Panc1 (cell line): ENCODE measurements at regions of chr5 and their contacts with region 1.

Region 1: DNA sequence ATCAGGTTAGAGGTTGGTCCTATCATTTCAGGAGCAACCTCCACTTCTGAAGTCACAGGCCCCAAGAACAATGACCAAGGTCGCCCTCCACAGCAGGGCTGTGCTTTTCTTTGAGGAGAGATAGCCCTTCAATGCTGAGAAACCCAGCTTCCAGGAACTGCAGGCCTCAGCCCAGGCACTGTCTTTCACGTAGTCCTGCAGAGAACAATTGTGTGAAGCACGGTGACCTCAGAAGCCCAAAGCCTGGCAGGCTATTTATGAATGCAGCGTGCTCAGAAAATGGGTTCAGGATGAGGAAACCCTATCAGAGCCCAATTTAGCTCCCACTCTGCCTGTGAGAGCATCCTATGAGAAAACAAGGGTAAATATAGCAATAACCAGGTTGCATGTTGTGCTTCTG is 388.3 kb downstream of the PLK2 start:
- DNase-seq: no peak
- ATAC-seq: peak; percentile 76; the same call in 1 of the 2 replicates
- H3K4me3 ChIP-seq: no peak overlapping the region
- H3K27ac ChIP-seq: peak overlapping the region; percentile 90; the same call in 1 of the 2 replicates
- H3K4me1 ChIP-seq: peaks cover 42% of the 10 kb centered on the region
- H3K27me3 ChIP-seq: no peaks in the 10 kb centered on the region
- CTCF ChIP-seq: no peak

Region 2: DNA sequence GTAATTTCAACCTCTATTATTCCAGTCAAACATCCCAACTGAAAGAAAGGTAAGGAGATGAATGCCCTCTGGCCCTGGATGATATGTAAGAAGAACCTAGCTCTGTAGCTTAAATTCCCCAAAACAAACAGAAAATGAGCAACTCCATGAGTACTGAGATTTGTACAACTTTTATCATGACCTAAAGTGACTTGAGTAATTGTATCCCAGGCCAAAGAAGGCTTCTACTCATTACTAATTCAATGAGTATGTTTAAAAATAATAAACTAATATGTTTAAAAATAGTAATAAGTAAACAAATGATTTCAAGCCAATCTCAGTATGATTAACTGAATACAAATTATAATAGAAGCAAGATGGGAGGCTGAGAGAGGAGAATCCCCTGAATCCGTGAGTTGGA is 175.0 kb before region 1 on chr5:
- CTCF ChIA-PET with region 1: no interaction called
- POLR2A ChIA-PET with region 1: interaction called, 12 read pairs
- in situ Hi-C with region 1: no loop called
- intact Hi-C with region 1: no loop called
- DNase-seq: no peak
- ATAC-seq: no peak
- H3K4me3 ChIP-seq: no peak overlapping the region
- H3K27ac ChIP-seq: peak overlapping the region; percentile 34; the same call in 1 of the 2 replicates
- H3K4me1 ChIP-seq: peaks cover 2% of the 10 kb centered on the region; the same call in 1 of the 2 replicates
- H3K27me3 ChIP-seq: no peaks in the 10 kb centered on the region
- CTCF ChIP-seq: no peak

Region 3: GRCh38 chr5:58172946-58173345 is 101.4 kb after region 1 on chr5:
- CTCF ChIA-PET with region 1: no interaction called
- POLR2A ChIA-PET with region 1: no interaction called
- in situ Hi-C with region 1: no loop called
- intact Hi-C with region 1: no loop called
- DNase-seq: no peak
- ATAC-seq: no peak
- H3K4me3 ChIP-seq: no peak overlapping the region
- H3K27ac ChIP-seq: peak overlapping the region; percentile 68; the same call in 1 of the 2 replicates
- H3K4me1 ChIP-seq: no peaks in the 10 kb centered on the region
- H3K27me3 ChIP-seq: no peaks in the 10 kb centered on the region
- CTCF ChIP-seq: no peak

Region 4: DNA sequence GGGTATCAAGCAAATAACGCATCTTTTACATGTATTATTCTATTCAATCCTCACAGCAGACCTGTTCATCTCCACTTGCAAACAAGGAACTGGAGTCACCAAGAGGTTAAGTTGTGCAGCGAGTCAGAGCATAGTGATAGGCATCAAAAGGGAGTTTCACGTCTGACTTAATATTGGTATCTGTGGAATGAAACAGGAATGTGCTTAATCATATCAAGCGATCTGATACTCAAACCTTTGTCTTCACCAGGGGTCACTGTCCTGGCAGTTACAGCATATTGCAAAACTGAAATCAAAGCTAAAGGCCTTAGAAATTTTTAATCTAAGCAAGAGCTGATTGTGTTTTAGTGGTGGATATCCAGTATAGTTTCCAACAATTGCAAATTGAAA is 116.7 kb after region 1 on chr5:
- CTCF ChIA-PET with region 1: no interaction called
- POLR2A ChIA-PET with region 1: no interaction called
- in situ Hi-C with region 1: no loop called
- intact Hi-C with region 1: loop called (anchors 10 kb)
- DNase-seq: peak; percentile 73
- ATAC-seq: peak; percentile 96
- H3K4me3 ChIP-seq: peak overlapping the region in 1 of 2 experiments; percentile 31; a peak in 2 of 4 replicates
- H3K27ac ChIP-seq: peak overlapping the region; percentile 100
- H3K4me1 ChIP-seq: peaks cover 57% of the 10 kb centered on the region
- H3K27me3 ChIP-seq: no peaks in the 10 kb centered on the region
- CTCF ChIP-seq: peak; percentile 26; the same call in 1 of the 2 replicates